Natural killer cell (primary cell): ENCODE measurements at regions of chr20 and their contacts with region 1.

Region 1: GRCh38 chr20:43983359-43983758 is 68.7 kb downstream of the TOX2 start:
- DNase-seq: peak in 1 of 2 donors; percentile 55
- ATAC-seq: no peak
- H3K4me3 ChIP-seq: no peak overlapping the region
- H3K4me3 Mint-ChIP-seq: no peak overlapping the region
- H3K27ac ChIP-seq: no peak overlapping the region
- H3K27ac Mint-ChIP-seq: no peak overlapping the region
- H3K4me1 ChIP-seq: peaks cover 27% of the 10 kb centered on the region
- H3K4me1 Mint-ChIP-seq: peaks cover 37 to 45% of the 10 kb centered on the region in 2 donors
- H3K27me3 ChIP-seq: peaks cover 36% of the 10 kb centered on the region
- H3K27me3 Mint-ChIP-seq: peaks cover 62 to 68% of the 10 kb centered on the region in 2 donors
- CTCF ChIP-seq: peak; percentile 38

Region 2: DNA sequence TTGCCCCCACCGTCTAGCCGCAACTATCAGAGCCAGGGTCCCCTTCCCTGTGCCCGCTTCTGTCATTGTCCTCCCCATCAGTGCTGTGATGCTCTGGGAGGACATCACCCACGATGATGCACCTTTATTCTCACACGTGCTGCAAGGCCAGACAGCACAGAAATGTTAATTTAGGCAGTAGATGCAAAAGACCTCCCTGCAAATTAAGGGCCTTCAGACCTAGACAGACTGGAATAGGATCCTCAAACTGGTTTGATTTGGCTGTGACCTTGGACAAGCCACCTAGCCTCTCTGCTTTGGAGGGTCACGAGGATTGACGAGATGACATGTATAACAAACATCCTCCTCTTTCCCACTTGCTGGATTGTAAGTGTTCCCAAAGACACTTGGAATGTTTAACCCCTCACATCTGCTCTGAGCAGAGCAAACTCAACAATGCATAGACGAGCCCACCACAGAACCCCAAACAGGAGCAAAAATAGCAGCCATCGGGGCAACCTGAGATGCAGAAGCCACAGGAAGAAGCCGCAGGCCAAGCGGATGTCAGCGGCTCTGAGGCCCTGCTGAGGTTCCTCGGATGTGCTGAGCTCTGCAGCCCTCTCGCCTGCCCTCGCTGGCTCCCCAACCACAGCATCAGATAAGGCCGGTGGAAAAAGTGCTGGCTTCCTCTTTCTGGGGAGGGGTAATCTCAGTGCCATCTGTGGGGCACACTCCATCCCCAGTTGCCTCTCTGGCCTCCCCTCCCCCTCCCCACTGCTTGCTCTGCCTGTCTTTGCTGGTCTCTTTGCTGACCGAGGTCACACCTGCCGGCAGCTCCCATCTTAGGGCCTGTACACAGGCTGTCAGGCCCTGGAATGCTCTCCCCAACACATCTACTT is 33.4 kb before region 1 on chr20:
- intact Hi-C with region 1: loop called (anchors 2 kb)
- DNase-seq: peak; percentile 72 to 86
- ATAC-seq: peak; percentile 79 to 97 (median 91)
- H3K4me3 ChIP-seq: no peak overlapping the region
- H3K4me3 Mint-ChIP-seq: peak overlapping the region; percentile 63
- H3K27ac ChIP-seq: no peak overlapping the region
- H3K27ac Mint-ChIP-seq: peak overlapping the region; percentile 17 to 50
- H3K4me1 ChIP-seq: peaks cover 67% of the 10 kb centered on the region
- H3K4me1 Mint-ChIP-seq: peaks cover 61 to 88% of the 10 kb centered on the region in 2 donors
- H3K27me3 ChIP-seq: peaks cover 55% of the 10 kb centered on the region
- H3K27me3 Mint-ChIP-seq: peaks cover 66 to 77% of the 10 kb centered on the region in 2 donors
- CTCF ChIP-seq: no peak

Region 3: GRCh38 chr20:44018259-44018941 is 35.0 kb after region 1 on chr20:
- intact Hi-C with region 1: loop called (anchors 5 kb)
- DNase-seq: no peak
- ATAC-seq: no peak
- H3K4me3 ChIP-seq: no peak overlapping the region
- H3K4me3 Mint-ChIP-seq: no peak overlapping the region
- H3K27ac ChIP-seq: no peak overlapping the region
- H3K27ac Mint-ChIP-seq: peak overlapping the region in 1 of 2 donors; percentile 80
- H3K4me1 ChIP-seq: peaks cover 41% of the 10 kb centered on the region
- H3K4me1 Mint-ChIP-seq: peaks cover 29 to 33% of the 10 kb centered on the region in 2 donors
- H3K27me3 ChIP-seq: peaks cover 32% of the 10 kb centered on the region
- H3K27me3 Mint-ChIP-seq: peaks cover 45 to 63% of the 10 kb centered on the region in 2 donors
- CTCF ChIP-seq: no peak

Region 4: GRCh38 chr20:44069203-44070011 is 86.0 kb after region 1 on chr20:
- intact Hi-C with region 1: loop called (anchors 5 kb)
- DNase-seq: peak; percentile 53 to 93
- ATAC-seq: peak; percentile 75 to 80 (median 77)
- H3K4me3 ChIP-seq: peak overlapping the region; percentile 14
- H3K4me3 Mint-ChIP-seq: peak overlapping the region; percentile 86
- H3K27ac ChIP-seq: peak overlapping the region; percentile 84
- H3K27ac Mint-ChIP-seq: peak overlapping the region; percentile 82 to 88
- H3K4me1 ChIP-seq: peaks cover 37% of the 10 kb centered on the region
- H3K4me1 Mint-ChIP-seq: peaks cover 24 to 38% of the 10 kb centered on the region in 2 donors
- H3K27me3 ChIP-seq: peaks cover 3% of the 10 kb centered on the region
- H3K27me3 Mint-ChIP-seq: peaks cover 34 to 36% of the 10 kb centered on the region in 2 donors
- CTCF ChIP-seq: no peak